Natural killer cell (primary cell): ENCODE measurements at regions of chr6 and their contacts with region 1.

Region 1: DNA sequence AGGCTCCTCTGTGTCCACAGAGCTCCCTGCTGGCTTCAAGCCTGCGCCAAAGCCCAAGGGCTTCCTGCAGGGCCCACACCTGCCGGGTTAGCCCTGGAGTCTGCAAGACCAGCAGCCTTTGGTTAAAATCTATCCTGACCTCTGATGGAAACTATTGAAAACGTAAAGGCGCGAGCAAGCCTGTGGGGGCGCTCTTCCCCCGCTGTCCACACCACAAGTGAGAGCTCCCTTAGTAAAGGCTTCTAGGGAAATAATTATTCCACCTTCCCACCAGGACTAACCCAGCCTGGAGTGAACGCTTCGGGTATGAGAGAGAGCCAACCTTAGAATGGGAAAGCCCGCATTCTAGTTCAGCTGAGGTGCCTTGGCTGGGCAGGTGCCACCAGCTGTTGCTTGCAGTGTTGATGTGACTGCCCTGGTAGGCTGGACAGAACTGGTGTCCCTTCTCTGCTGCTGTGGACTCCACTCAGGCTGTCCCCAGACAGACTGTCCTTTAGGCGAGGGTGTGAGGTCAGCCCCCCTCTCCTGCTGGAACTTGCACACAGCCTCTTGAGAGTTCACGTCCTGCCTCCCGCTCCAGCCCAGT is 68.7 kb downstream of the SYTL3 start:
- DNase-seq: peak in 1 of 2 donors; percentile 31
- ATAC-seq: no peak
- H3K4me3 ChIP-seq: no peak overlapping the region
- H3K4me3 Mint-ChIP-seq: peak overlapping the region; percentile 86
- H3K27ac ChIP-seq: peak overlapping the region; percentile 95
- H3K27ac Mint-ChIP-seq: peak overlapping the region; percentile 92 to 98
- H3K4me1 ChIP-seq: peaks cover 78% of the 10 kb centered on the region
- H3K4me1 Mint-ChIP-seq: peaks cover 74 to 76% of the 10 kb centered on the region in 2 donors
- H3K27me3 ChIP-seq: no peaks in the 10 kb centered on the region
- H3K27me3 Mint-ChIP-seq: no peaks in the 10 kb centered on the region
- CTCF ChIP-seq: no peak

Region 2: GRCh38 chr6:158559895-158560835 is 158.4 kb before region 1 on chr6 and contains the start of gene TMEM181:
- intact Hi-C with region 1: loop called (anchors 10 kb)
- DNase-seq: peak; percentile 86 to 96
- ATAC-seq: peak; percentile 81 to 91 (median 87)
- H3K4me3 ChIP-seq: peak within 1 kb of the TSS; percentile 76
- H3K4me3 Mint-ChIP-seq: peak within 1 kb of the TSS; percentile 98
- H3K27ac ChIP-seq: peak within 1 kb of the TSS; percentile 92
- H3K27ac Mint-ChIP-seq: peak within 1 kb of the TSS; percentile 88 to 96
- H3K4me1 ChIP-seq: peaks cover 52% of the 10 kb centered on the region
- H3K4me1 Mint-ChIP-seq: peaks cover 42 to 45% of the 10 kb centered on the region in 2 donors
- H3K27me3 ChIP-seq: no peaks in the 10 kb centered on the region
- H3K27me3 Mint-ChIP-seq: no peaks in the 10 kb centered on the region
- CTCF ChIP-seq: no peak
- total RNA-seq, gene TMEM181: 44.8 to 60.9 (median 45.0) TPM

Region 3: DNA sequence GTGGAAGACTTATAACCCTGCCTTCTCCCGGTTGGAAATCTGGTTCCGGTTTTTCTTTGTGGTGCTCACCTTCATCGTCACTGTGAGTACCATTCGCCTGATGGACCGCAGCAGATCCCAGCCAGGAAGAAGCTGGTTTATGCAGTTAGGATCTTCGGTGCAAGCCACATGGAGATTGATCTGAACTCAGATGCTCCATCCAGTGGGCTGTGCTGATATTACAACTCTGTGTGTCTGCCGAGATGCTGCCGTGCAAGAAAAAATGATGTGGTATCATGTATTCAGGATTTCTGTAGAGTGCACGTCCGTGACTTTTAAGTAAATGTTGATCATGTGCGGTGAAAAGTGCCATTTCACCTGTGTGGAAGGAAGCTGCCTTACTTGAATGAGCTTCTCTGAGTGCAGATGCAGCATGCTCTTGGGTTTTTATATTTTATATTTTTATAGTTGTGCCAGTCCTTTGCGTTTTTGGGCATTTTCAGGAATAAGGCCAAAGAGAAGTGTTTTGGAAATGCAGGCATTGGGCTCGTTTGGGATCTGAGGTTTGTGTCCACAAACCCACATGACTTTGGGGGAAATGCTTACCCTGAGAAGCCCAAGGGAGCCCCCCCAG is 113.2 kb before region 1 on chr6:
- intact Hi-C with region 1: no loop called
- DNase-seq: peak; percentile 41 to 77
- ATAC-seq: peak; percentile 68 to 92 (median 84)
- H3K4me3 ChIP-seq: no peak overlapping the region
- H3K4me3 Mint-ChIP-seq: no peak overlapping the region
- H3K27ac ChIP-seq: no peak overlapping the region
- H3K27ac Mint-ChIP-seq: peak overlapping the region; percentile 32 to 71
- H3K4me1 ChIP-seq: no peaks in the 10 kb centered on the region
- H3K4me1 Mint-ChIP-seq: peaks cover 23% of the 10 kb centered on the region in 2 donors
- H3K27me3 ChIP-seq: no peaks in the 10 kb centered on the region
- H3K27me3 Mint-ChIP-seq: no peaks in the 10 kb centered on the region
- CTCF ChIP-seq: peak; percentile 71

Region 4: DNA sequence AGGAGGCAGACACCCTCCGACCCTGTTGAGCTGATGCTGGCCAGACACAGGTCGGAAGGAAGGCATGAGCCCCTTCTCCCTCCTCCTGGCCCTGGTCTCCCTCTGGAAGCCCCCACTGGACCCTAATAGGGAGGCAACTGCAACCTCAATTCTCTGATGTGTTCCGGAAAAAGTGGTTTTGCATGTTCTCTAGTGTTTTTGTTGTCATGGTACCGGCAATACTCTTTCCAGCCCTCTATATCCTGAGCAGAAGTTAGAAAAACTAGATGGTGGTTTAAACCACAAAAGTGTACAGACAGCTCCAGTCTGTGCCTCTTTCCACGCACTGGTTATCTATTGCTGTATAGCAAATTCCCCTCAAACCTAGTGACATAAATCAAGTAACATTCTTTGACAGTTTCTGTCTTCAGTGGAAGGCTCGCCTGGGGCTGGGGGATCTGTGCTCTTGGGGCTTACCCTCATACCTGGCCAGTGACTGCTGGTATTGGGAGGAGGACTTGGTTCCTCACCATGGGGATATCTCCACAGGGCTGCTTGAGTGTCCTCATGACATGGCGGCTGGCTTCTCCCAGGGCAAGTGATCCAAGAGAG is 31.7 kb before region 1 on chr6:
- intact Hi-C with region 1: loop called (anchors 2 kb)
- DNase-seq: peak; percentile 44 to 90
- ATAC-seq: peak; percentile 84 to 94 (median 93)
- H3K4me3 ChIP-seq: no peak overlapping the region
- H3K4me3 Mint-ChIP-seq: peak overlapping the region; percentile 85
- H3K27ac ChIP-seq: peak overlapping the region; percentile 92
- H3K27ac Mint-ChIP-seq: peak overlapping the region; percentile 88 to 97
- H3K4me1 ChIP-seq: peaks cover 37% of the 10 kb centered on the region
- H3K4me1 Mint-ChIP-seq: peaks cover 43 to 51% of the 10 kb centered on the region in 2 donors
- H3K27me3 ChIP-seq: no peaks in the 10 kb centered on the region
- H3K27me3 Mint-ChIP-seq: no peaks in the 10 kb centered on the region
- CTCF ChIP-seq: no peak

Region 5: GRCh38 chr6:158803733-158804143 is 85.2 kb after region 1 on chr6:
- intact Hi-C with region 1: loop called (anchors 5 kb)
- DNase-seq: peak; percentile 44 to 76
- ATAC-seq: peak; percentile 65 to 80 (median 76)
- H3K4me3 ChIP-seq: peak overlapping the region; percentile 25
- H3K4me3 Mint-ChIP-seq: peak overlapping the region; percentile 72
- H3K27ac ChIP-seq: peak overlapping the region; percentile 74
- H3K27ac Mint-ChIP-seq: peak overlapping the region; percentile 88 to 91
- H3K4me1 ChIP-seq: peaks cover 56% of the 10 kb centered on the region
- H3K4me1 Mint-ChIP-seq: peaks cover 76% of the 10 kb centered on the region in 2 donors
- H3K27me3 ChIP-seq: no peaks in the 10 kb centered on the region
- H3K27me3 Mint-ChIP-seq: no peaks in the 10 kb centered on the region
- CTCF ChIP-seq: no peak

Region 6: DNA sequence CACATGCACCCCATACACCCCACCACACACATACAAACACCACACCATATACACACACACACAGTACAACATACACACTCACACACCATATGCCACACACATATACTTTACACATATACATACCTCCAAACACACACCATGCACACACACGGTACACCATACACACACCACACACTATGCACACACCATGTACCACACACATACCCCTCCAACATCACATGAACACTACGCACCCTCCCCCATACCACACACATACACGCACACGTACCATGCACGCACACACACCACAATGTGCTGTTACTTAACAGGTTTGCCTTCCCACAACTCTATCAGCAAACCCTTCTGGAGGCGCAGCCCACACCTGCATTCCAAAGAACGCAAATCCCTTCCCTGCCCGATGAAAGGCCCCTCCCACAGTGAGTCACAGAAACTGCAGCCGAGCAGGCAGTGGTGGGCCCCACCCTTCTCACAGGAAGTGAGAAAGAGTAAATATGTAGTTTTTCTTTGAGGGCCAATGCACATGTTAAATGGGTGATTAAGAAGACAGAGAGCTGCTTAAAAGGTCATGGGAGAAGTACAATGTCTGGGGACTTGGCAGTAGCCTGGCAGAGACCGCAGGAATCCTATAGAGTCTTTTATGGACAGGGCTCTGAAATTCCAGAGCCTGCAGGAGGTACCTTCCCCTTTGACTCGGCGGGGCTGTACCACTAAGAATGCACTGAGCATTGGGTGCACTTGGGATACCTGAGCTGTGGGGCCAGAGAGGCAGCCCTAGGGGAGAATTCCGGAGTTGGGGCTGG is 134.7 kb after region 1 on chr6:
- intact Hi-C with region 1: loop called (anchors 5 kb)
- DNase-seq: peak; percentile 77 to 93
- ATAC-seq: peak; percentile 65 to 86 (median 73)
- H3K4me3 ChIP-seq: peak overlapping the region; percentile 22
- H3K4me3 Mint-ChIP-seq: no peak overlapping the region
- H3K27ac ChIP-seq: peak overlapping the region; percentile 91
- H3K27ac Mint-ChIP-seq: no peak overlapping the region
- H3K4me1 ChIP-seq: peaks cover 64% of the 10 kb centered on the region
- H3K4me1 Mint-ChIP-seq: peaks cover 25 to 27% of the 10 kb centered on the region in 2 donors
- H3K27me3 ChIP-seq: no peaks in the 10 kb centered on the region
- H3K27me3 Mint-ChIP-seq: no peaks in the 10 kb centered on the region
- CTCF ChIP-seq: no peak

Region 7: GRCh38 chr6:158869826-158870648 is 151.5 kb after region 1 on chr6:
- intact Hi-C with region 1: loop called (anchors 1 kb)
- DNase-seq: peak; percentile 83 to 98
- ATAC-seq: peak; percentile 73 to 91 (median 80)
- H3K4me3 ChIP-seq: peak overlapping the region; percentile 47
- H3K4me3 Mint-ChIP-seq: peak overlapping the region; percentile 92
- H3K27ac ChIP-seq: peak overlapping the region; percentile 90
- H3K27ac Mint-ChIP-seq: peak overlapping the region; percentile 98 to 100
- H3K4me1 ChIP-seq: peaks cover 30% of the 10 kb centered on the region
- H3K4me1 Mint-ChIP-seq: peaks cover 34 to 39% of the 10 kb centered on the region in 2 donors
- H3K27me3 ChIP-seq: no peaks in the 10 kb centered on the region
- H3K27me3 Mint-ChIP-seq: peaks cover 2 to 7% of the 10 kb centered on the region in 2 donors
- CTCF ChIP-seq: no peak